ENCODE measurements at regions of chr3 and their contacts with region 1.

Region 1: GRCh38 chr3:183904833-183905780 is 20.4 kb upstream of the PARL start:
- DNase-seq: no peak
- ATAC-seq: peak; percentile 76
- H3K4me3 ChIP-seq: no peak overlapping the region; a peak in 1 of 6 replicates
- H3K27ac ChIP-seq: no peak overlapping the region
- H3K4me1 ChIP-seq: peaks cover 50% of the 10 kb centered on the region
- H3K27me3 ChIP-seq: peaks cover 0 to 5% of the 10 kb centered on the region in 2 experiments; a peak in 1 of 5 replicates
- CTCF ChIP-seq: no peak
- EP300 ChIP-seq: no peak
- POLR2A ChIP-seq: no peak
- RAD21 ChIP-seq: no peak

Region 2: GRCh38 chr3:184017672-184018423 is 112.7 kb after region 1 on chr3 and contains the start of gene ABCC5:
- CTCF ChIA-PET with region 1: no interaction called
- POLR2A ChIA-PET with region 1: interaction called, 5 read pairs
- in situ Hi-C with region 1: no loop called
- intact Hi-C with region 1: loop called (anchors 1 kb)
- DNase-seq: peak; percentile 85
- ATAC-seq: peak; percentile 99
- H3K4me3 ChIP-seq: peak within 1 kb of the TSS; percentile 73 to 97 (median 79)
- H3K27ac ChIP-seq: peak within 1 kb of the TSS; percentile 30
- H3K4me1 ChIP-seq: peaks cover 32% of the 10 kb centered on the region
- H3K27me3 ChIP-seq: no peaks in the 10 kb centered on the region
- CTCF ChIP-seq: peak; percentile 42; the same call in 1 of the 2 replicates
- EP300 ChIP-seq: no peak
- POLR2A ChIP-seq: peak; percentile 31 to 89; a peak in 2 of 4 replicates
- RAD21 ChIP-seq: 0 out of 2 replicates have a peak, but pooled peaks have one; percentile 1
- total RNA-seq, gene ABCC5: 7.8 and 12.7 TPM in 2 replicates